ENCODE measurements at regions of chr3 and their contacts with region 1.

Region 1: DNA sequence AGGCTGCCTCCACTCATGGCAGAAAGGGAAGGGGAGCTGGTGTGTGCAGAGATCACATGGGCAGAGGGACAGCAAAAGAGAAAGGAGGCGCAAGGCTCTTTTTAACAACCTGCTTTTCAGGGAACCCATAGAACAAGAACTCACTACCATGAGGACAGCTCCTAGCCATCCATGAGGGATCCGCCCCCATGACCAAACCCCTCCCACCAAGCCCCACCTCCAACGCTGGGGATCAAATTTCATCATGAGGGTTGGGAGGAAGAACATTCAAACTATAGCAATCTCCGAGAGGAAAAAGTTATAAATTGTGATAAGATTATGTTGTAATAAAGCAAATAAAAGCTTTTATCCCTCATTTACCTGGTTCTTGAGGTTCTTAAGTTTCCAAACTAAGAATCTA is 84.7 kb upstream of the LMCD1 start:
- DNase-seq: no peak
- H3K4me3 ChIP-seq: no peak overlapping the region
- H3K27ac ChIP-seq: no peak overlapping the region
- H3K27me3 ChIP-seq: peaks cover 4% of the 10 kb centered on the region
- CTCF ChIP-seq: no peak

Region 2: DNA sequence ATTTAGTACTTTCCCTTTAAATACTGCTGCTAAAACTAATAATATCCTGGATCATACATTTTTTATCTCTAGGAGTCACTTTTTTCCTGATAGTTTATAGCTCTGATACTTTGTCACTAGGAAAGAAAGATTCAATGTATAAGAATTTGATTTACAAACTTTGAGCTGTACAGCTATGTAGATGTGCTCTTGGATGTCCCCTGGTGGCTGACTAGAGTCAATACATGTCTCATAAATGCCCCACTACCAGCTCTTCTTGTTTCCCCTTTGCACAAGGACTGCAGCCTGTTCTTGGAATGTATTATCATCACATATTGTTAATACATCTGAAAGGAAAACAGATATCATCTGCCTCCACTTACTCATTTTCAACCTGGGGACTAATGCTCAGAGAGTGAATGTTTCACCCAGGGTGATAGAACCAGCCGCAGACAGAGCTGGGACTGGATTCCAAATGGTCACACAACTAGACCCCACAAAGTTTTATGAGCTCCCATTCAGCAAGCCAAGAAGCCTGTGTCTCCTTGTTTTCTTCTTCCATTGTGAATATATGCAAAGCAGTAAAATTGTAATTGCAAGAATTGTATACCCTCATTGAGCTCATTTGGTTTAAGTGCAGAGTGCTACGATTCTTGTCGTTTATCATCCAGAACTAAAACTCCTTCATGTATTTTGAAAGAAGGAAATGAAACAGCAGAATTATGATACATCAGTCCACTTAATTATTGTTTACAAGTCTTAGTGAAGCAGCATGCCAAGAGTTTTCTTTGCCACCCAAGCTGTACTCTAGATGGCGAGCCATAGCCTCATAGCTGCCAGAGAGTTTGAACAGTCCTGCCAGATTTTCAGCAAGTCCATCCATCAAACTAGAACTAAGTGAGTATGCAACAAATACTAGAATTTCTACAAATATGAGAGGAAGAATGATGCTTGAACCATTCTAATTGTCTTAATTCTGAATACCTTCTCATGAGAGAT is 177.0 kb before region 1 on chr3:
- CTCF ChIA-PET with region 1: interaction called, 27 read pairs
- POLR2A ChIA-PET with region 1: no interaction called
- DNase-seq: peak; percentile 27
- H3K4me3 ChIP-seq: no peak overlapping the region
- H3K27ac ChIP-seq: no peak overlapping the region
- H3K27me3 ChIP-seq: no peaks in the 10 kb centered on the region
- CTCF ChIP-seq: peak; percentile 97

Region 3: DNA sequence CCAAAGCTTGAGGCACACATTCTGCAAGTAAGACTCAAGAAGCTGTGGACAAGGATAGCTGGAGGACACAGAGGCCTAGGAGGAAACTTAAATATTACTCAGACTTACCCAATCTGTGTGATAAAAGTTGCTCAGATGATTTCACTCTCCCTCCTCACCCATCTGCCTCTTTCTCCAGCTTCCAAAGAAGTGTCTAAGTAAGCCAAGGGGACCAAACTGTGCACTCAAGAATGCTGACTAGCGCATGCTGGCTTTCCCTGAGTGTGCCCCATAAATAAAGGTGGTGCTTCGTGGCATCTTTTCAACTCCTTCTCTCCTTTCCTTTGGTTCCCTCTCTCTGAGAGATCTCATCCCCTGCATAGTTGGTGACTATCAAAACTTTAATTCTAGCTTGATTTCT is 126.4 kb before region 1 on chr3:
- CTCF ChIA-PET with region 1: no interaction called
- POLR2A ChIA-PET with region 1: no interaction called
- DNase-seq: no peak
- H3K4me3 ChIP-seq: no peak overlapping the region
- H3K27ac ChIP-seq: no peak overlapping the region
- H3K27me3 ChIP-seq: no peaks in the 10 kb centered on the region
- CTCF ChIP-seq: no peak

Region 4: DNA sequence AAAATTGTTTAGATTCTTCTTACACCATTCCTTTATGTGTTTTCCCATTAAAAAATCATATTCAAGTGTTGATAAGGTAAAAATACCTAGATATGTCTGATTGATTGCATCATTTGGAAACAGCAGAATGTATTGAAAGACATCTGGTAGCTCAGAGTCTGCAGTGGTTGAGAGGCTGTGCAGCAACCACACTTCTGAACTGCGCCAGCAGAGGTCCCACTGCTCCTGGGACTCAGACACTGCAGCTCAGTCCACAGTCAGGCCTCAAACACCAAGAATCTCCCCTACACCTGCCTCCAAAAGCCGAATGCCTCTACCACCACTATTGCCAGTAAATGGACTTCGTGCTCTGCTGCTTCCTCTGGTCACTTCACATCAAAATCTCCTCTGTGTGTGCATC is 92.2 kb before region 1 on chr3:
- CTCF ChIA-PET with region 1: interaction called, 100 read pairs
- POLR2A ChIA-PET with region 1: no interaction called
- DNase-seq: no peak
- H3K4me3 ChIP-seq: no peak overlapping the region
- H3K27ac ChIP-seq: no peak overlapping the region
- H3K27me3 ChIP-seq: no peaks in the 10 kb centered on the region
- CTCF ChIP-seq: peak; percentile 62

Region 5: DNA sequence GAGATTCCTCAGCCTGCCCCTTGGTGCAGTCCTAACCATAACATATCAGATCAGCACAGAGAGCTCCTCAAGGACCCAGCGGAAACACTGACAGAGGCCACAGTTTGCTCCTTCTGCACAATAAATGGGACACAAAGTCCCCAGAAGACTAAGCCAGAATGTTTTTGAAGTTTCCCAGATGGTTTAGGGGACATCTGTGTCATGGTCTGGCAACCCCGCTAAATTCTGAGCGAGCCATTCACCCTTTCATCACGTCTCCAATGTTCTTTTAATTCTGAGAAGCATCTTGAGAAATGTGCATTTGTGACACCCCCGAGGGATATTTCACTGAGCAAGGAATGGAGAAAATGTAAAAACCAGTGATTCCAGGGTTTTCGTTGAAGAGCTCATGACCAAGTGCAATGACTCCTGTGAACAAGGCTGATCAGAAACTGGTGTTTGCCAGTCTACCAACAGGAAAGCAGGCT is 19.8 kb after region 1 on chr3:
- CTCF ChIA-PET with region 1: interaction called, 30 read pairs
- POLR2A ChIA-PET with region 1: no interaction called
- DNase-seq: no peak
- H3K4me3 ChIP-seq: no peak overlapping the region
- H3K27ac ChIP-seq: no peak overlapping the region
- H3K27me3 ChIP-seq: peaks cover 21% of the 10 kb centered on the region
- CTCF ChIP-seq: no peak

Region 6: GRCh38 chr3:8607234-8608040 is 190.5 kb after region 1 on chr3:
- CTCF ChIA-PET with region 1: interaction called, 10 read pairs
- POLR2A ChIA-PET with region 1: no interaction called
- DNase-seq: peak; percentile 37
- H3K4me3 ChIP-seq: no peak overlapping the region
- H3K27ac ChIP-seq: no peak overlapping the region
- H3K27me3 ChIP-seq: peaks cover 3% of the 10 kb centered on the region
- CTCF ChIP-seq: peak; percentile 60